ENCODE measurements at regions of chr2 and their contacts with region 1.

Region 1: DNA sequence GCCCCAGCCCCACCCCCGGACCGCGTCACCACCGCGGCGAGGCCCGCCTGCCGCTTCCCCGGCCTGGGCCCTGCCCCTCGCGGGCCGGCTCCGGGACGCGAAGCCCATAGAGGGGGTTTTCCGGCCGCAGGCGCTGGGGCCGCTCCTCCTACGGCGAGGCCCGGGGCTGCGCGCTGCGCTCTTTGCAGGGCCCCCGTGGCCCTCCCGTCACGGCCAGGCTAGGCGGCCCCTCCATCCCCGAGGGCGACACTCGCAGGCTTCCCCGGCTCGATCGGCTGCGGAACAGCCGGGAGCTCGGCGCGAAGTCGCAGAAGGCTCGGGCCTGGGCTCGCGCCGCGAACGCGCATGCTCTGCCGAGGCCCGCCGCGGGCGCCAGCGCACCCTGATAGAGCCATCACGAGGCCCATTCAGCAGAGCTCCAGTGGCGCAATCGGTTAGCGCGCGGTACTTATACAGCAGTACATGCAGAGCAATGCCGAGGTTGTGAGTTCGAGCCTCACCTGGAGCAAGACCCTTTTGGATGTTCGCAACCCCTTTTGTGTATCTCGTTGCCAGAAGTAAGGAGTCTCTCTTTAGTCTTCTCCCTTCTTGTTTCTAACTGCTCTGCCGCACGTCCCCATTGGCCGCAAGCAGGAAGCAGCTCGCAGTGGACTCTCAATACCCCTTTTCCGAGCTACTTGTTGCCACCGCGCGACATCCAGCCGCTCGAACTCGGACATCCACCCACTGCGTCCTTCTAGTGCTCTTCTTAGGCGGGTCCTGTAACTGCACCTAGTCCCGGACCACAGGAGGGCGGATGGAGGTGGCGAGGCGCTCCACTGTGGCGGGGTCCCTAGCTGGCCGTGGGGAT is 18.0 kb upstream of the HAAO start:
- DNase-seq: peak; percentile 99
- H3K4me3 Mint-ChIP-seq: peak overlapping the region; percentile 97
- H3K27ac Mint-ChIP-seq: peak overlapping the region; percentile 100
- H3K4me1 Mint-ChIP-seq: peaks cover 20% of the 10 kb centered on the region
- H3K27me3 Mint-ChIP-seq: peaks cover 15% of the 10 kb centered on the region

Region 2: DNA sequence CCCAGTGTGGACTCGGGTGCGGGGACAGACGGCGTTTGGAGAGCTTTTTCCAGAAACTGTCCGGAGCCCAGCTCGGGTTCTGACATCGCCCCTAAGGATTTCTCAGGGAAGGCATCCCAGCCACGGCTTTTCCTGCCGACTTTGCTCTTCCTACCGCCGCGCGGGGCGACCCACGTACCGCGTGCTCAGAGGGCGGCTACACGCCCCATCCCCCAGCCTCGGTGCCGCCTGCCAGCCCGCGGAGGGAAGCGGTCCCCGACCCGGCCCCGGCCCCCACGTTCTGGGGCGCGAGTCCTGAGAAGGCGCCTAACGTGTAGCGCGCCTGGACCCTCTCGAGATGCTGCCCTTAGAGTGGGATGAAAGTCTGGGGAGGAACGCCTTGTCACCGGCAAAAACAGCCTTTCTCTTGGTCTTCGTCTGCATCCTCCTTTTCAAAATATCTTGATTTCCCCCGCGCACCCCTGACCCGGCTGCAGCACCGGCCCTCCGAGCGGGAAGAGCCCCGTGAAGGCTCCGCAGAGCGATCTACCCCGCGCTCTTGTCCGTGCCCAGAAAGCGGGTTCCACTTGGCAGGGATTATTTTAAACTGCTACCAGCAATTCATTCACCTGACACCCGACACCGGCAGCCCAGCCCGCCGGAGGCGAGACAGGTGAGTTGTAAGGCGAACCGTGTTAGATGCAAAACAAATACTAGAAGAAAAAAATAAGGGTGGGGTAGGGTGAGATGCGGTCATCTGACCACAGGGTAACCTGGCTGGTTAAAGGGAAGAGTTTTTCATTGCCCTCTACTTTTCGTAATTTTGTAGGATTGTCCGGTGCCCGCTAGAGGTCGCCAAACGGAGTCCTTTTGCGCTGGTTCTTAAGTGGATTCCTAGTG is 315.8 kb before region 1 on chr2:
- intact Hi-C with region 1: loop called (anchors 5 kb)
- DNase-seq: peak; percentile 92
- H3K4me3 Mint-ChIP-seq: peak overlapping the region; percentile 86
- H3K27ac Mint-ChIP-seq: peak overlapping the region; percentile 76
- H3K4me1 Mint-ChIP-seq: peaks cover 10% of the 10 kb centered on the region
- H3K27me3 Mint-ChIP-seq: peaks cover 37% of the 10 kb centered on the region

Region 3: GRCh38 chr2:42770288-42771131 is 39.8 kb before region 1 on chr2:
- intact Hi-C with region 1: no loop called
- DNase-seq: no peak
- H3K4me3 Mint-ChIP-seq: no peak overlapping the region
- H3K27ac Mint-ChIP-seq: no peak overlapping the region
- H3K4me1 Mint-ChIP-seq: peaks cover 5% of the 10 kb centered on the region
- H3K27me3 Mint-ChIP-seq: no peaks in the 10 kb centered on the region

Region 4: DNA sequence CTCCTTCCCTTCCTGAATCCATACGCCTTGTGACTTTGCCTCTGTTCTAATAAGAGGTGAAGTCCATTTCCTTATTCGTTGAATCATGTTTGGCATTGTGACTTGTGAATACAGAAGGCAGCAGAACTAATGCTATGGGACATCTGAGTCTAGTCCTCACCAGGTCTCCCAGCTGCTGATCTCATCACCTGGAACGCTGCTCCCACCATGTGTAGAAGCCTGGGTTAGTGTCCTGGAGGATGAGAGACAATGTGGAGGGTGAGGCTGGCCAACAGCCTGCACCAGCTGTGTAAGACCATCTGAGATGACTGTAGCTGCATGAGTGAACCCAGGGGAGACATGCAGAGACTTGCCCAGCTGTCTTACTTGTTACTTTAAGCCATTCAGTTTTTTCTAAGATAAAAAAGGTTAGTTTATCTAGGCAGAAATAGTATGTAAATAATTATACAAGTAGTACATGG is 14.5 kb before region 1 on chr2:
- intact Hi-C with region 1: loop called (anchors 2 kb)
- DNase-seq: no peak
- H3K4me3 Mint-ChIP-seq: no peak overlapping the region
- H3K27ac Mint-ChIP-seq: no peak overlapping the region
- H3K4me1 Mint-ChIP-seq: peaks cover 29% of the 10 kb centered on the region
- H3K27me3 Mint-ChIP-seq: peaks cover 39% of the 10 kb centered on the region

Region 5: GRCh38 chr2:42828487-42829425 is 18.4 kb after region 1 on chr2:
- intact Hi-C with region 1: loop called (anchors 1 kb)
- DNase-seq: peak; percentile 91
- H3K4me3 Mint-ChIP-seq: no peak overlapping the region
- H3K27ac Mint-ChIP-seq: no peak overlapping the region
- H3K4me1 Mint-ChIP-seq: peaks cover 7% of the 10 kb centered on the region
- H3K27me3 Mint-ChIP-seq: peaks cover 13% of the 10 kb centered on the region

Region 6: DNA sequence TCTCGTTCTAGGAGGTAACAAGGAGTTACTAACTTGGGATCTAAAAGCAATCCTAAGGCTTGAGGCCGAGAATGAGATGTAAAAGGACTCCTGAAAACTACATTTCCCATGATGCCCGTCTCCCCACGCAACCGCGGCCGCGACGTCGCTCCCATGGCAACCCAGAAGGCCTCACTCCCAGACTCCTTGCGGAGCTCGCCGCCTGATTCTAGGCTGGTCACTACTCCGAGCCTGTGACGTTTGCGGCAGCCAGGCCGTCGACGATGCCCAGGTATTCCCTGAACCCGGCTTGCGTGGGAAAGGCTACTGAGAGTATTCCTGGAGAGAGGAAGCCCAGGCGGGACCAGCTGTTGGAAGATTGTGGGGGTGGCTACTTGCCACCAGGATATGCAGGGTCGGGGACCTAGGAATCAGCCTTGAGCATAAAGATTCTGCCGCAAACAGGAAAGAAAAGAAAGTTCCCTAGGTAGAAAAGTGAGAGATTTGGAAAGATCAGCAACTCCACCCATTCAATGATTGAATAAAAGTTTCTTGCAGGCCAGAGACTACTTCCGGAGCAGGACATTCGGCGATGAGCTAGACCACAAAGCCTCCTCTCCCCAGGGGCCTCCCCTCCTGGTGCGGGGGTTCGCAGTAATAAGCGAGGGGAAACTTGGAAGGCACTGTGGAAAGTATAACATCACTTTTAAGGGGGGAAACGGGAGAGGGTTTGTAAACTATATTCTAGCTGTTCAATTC is 963.7 kb after region 1 on chr2 and contains the start of gene DYNC2LI1:
- intact Hi-C with region 1: loop called (anchors 1 kb)
- DNase-seq: peak; percentile 94
- H3K4me3 Mint-ChIP-seq: peak within 1 kb of the TSS; percentile 99
- H3K27ac Mint-ChIP-seq: peak within 1 kb of the TSS; percentile 95
- H3K4me1 Mint-ChIP-seq: peaks cover 18% of the 10 kb centered on the region
- H3K27me3 Mint-ChIP-seq: no peaks in the 10 kb centered on the region
- total RNA-seq, gene DYNC2LI1: 9.8 and 10.8 TPM in 2 replicates

Region 7: DNA sequence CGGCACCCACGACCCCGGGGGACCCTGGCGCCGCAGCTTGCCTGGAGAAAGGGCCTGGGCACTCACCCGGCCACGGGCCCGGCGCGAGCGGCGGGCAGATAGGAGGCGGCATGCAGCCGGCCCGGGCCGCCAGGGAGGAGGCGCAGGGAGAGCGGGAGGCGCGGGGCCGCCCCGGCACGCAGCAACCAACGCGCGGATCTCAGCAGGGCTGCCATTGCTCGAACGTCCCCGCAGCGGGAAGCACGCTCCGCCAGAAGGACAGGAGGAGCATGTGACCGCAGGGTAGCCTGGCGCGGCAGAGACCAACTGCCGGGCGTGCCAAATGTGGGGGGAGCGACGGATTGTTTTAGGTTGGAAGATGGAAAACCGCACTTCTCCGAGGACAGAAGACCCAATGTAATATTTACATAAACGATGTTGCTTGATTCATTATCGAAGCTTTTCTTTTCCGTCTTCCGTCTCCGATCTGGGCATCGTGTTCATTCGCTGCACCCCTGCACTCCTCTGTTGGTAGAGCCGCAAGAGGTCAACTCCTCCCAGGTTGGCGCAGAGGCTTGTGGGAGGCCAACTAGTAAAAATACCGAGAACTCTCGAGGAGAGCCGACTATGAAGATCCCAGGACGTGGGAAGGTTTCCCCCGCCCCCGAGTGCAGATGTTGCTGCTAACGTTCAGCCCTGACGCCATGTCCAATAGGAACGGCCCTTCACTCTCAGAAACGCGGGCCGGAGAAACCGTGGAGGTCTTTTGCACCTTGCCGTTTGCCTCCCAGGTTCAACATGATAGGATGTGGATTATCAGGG is 1185.6 kb after region 1 on chr2 and contains the start of gene LRPPRC:
- intact Hi-C with region 1: loop called (anchors 10 kb)
- DNase-seq: peak; percentile 96
- H3K4me3 Mint-ChIP-seq: peak within 1 kb of the TSS; percentile 96
- H3K27ac Mint-ChIP-seq: peak within 1 kb of the TSS; percentile 95
- H3K4me1 Mint-ChIP-seq: peaks cover 32% of the 10 kb centered on the region
- H3K27me3 Mint-ChIP-seq: peaks cover 5% of the 10 kb centered on the region
- total RNA-seq, gene LRPPRC: 173 and 179 TPM in 2 replicates

Region 8: DNA sequence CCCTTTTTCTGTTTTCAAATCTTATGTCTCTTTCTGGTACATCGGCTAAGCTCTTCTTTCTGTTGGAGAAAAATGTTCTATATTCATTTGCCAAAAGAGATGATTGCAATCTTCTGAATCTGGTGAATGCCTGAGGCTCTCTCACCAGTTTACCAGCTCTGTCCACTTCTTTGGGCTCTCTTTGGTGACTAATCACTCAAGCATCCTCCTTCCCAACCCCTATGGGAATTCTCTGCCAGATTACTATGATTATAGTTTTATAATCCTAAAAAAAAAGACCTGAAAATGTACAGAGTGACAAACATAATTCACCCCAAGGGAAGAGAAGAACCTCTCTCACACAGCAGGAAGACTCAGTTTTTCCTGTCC is 1738.7 kb after region 1 on chr2:
- intact Hi-C with region 1: no loop called
- DNase-seq: no peak
- H3K4me3 Mint-ChIP-seq: no peak overlapping the region
- H3K27ac Mint-ChIP-seq: no peak overlapping the region
- H3K4me1 Mint-ChIP-seq: peaks cover 2% of the 10 kb centered on the region
- H3K27me3 Mint-ChIP-seq: peaks cover 2% of the 10 kb centered on the region

Measured in activated CD4-positive, alpha-beta T cell treated with anti-CD3 and anti-CD28 coated beads, Interleukin-2, amount 10 ng/mL, durations not matched to agents 24 days and 14 days (primary cell).